Activated CD4-positive, alpha-beta memory T cell treated with anti-CD3 and anti-CD28 coated beads for 36 hours (primary cell): ENCODE measurements at regions of chr6 and their contacts with region 1.

Region 1: GRCh38 chr6:108113557-108114519 is 39.3 kb upstream of the OSTM1 start:
- DNase-seq: peak; percentile 21
- H3K4me3 Mint-ChIP-seq: peak overlapping the region; percentile 46
- H3K27ac Mint-ChIP-seq: no peak overlapping the region
- H3K4me1 Mint-ChIP-seq: peaks cover 43% of the 10 kb centered on the region
- H3K27me3 Mint-ChIP-seq: peaks cover 71% of the 10 kb centered on the region

Region 2: DNA sequence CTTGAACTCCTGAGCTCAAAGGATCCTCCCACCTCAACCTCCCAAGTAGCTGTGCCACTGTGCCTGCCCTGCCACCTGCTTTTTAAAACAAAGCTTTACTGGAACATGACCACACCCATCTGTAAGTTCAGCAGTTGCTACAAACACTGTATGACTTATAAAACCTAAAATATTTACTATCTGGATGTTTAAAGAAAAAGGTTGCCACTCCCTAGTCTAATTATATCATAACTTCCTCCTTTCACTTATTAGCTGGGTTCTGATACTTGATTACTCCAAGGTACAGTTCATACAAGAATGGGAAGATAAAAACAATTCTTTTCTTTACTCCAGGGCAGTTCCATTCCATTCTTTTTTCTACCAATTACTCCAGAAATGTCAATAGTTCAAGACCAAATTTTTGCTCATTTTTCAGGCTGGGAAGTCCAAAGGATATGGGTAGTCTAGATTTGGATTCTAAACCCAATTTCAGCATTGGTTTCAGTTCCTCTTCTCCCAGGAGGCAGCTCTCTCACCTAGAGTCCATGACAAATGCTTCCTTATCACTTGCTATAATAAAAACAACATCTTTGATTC is 218.9 kb before region 1 on chr6:
- CTCF ChIA-PET with region 1: no interaction called
- POLR2A ChIA-PET with region 1: no interaction called
- intact Hi-C with region 1: no loop called
- DNase-seq: no peak
- H3K4me3 Mint-ChIP-seq: no peak overlapping the region
- H3K27ac Mint-ChIP-seq: no peak overlapping the region
- H3K4me1 Mint-ChIP-seq: peaks cover 7% of the 10 kb centered on the region
- H3K27me3 Mint-ChIP-seq: no peaks in the 10 kb centered on the region

Region 3: GRCh38 chr6:107977283-107977682 is 136.6 kb before region 1 on chr6:
- CTCF ChIA-PET with region 1: no interaction called
- POLR2A ChIA-PET with region 1: no interaction called
- intact Hi-C with region 1: loop called (anchors 2 kb)
- DNase-seq: no peak
- H3K4me3 Mint-ChIP-seq: no peak overlapping the region
- H3K27ac Mint-ChIP-seq: no peak overlapping the region
- H3K4me1 Mint-ChIP-seq: no peaks in the 10 kb centered on the region
- H3K27me3 Mint-ChIP-seq: no peaks in the 10 kb centered on the region

Region 4: DNA sequence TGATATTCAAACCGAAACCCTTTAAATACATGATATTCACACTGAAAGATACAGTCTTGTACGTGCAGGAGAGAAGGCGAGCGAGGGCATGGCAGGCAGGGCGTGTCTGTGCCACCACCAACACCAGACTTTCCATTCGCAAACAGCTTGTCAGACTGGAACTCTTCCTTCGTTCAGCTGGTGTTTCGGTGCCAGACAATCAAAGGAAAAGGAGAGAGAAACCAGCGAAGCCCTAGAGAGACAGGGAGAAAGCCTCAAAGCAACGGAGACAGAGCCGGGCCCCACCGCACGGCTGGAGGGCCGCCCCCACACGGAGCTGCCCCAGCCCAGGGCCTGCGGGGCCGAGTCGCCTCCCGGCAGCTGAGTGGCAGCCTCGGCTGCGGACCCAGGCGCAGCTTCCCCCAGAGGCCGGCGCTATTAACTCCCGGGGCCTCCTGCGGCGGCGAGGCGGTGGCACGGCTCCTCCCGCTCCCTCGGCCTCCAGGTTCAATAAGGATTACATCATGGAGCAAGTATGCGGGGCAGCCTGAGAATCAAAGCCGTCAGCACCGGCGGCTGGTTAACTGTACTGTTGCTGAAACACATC is 19.8 kb after region 1 on chr6:
- CTCF ChIA-PET with region 1: interaction called, 3 read pairs
- POLR2A ChIA-PET with region 1: no interaction called
- intact Hi-C with region 1: loop called (anchors 2 kb)
- DNase-seq: peak; percentile 55
- H3K4me3 Mint-ChIP-seq: peak overlapping the region; percentile 72
- H3K27ac Mint-ChIP-seq: no peak overlapping the region
- H3K4me1 Mint-ChIP-seq: peaks cover 9% of the 10 kb centered on the region
- H3K27me3 Mint-ChIP-seq: peaks cover 61% of the 10 kb centered on the region

Region 5: DNA sequence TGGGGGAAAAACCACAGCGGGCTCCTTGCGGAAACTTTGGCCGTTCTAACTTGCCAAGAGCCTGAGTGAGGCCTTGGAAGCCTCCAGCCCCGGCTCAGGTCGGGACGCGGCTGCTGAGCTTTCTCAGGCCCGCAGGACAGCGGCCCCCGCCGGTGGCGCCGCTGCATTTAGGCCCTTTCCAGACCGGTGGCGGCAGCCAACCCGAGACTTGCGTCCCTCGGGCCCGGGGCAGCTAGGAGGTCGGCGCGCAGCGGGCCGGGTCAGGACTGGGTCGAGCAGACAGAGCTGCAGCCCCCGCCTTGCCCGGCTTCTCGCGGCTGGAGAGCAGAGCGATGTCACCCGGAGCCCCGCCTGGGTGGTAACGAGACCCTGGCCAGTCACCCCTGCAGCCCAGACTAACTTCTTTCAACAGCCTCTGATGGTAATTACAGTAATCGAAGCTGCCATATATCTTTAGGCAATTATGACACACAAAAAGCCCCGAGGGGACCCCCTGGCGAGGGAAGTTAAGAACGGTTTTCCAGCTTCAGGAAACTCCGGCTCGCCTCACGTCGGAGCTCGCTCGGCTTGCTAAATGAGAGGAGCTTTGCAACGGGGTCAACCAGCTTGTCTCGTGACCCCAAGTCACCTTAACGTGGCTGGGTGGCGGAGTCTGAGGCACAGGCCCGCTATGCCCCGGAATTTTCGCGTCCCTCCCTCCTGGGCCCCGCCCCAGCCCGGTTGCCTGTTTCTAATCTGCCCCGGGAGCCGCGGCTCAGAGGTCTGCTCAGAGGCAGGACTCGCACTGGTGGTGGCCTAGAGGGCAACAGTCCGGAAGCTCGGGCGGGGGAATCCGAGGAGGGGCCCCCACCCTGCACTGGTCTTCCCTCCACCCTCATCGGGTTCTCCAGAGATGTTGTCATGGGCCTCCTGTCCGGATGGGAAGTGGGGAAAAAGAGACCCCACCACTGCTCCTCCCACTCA is 54.9 kb after region 1 on chr6:
- CTCF ChIA-PET with region 1: interaction called, 9 read pairs
- POLR2A ChIA-PET with region 1: no interaction called
- intact Hi-C with region 1: loop called (anchors 2 kb)
- DNase-seq: peak; percentile 37
- H3K4me3 Mint-ChIP-seq: peak overlapping the region; percentile 48
- H3K27ac Mint-ChIP-seq: no peak overlapping the region
- H3K4me1 Mint-ChIP-seq: peaks cover 40% of the 10 kb centered on the region
- H3K27me3 Mint-ChIP-seq: peaks cover 84% of the 10 kb centered on the region

Region 6: DNA sequence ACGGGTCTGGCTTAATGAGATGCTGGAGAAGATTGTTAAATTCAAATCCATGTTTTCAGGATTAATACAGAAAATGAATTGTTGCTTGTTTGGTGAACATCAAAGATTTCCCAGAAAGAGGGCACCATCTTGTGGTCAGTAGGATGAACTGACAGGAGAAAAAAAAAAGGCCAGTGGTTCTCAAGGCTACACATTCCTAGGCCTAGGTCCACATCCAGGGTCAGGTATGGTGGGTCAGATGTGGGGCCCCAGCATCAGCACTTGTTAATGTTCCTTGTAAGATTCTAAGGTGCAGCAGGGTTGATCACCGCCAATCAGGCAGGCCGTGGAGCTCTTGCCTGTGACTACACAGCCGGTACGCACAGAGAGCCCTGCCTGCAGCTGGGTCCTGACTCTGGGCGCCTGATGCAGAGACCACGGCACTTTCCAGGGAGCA is 412.9 kb after region 1 on chr6:
- CTCF ChIA-PET with region 1: interaction called, 6 read pairs
- POLR2A ChIA-PET with region 1: interaction called, 4 read pairs
- intact Hi-C with region 1: loop called (anchors 1 kb)
- DNase-seq: no peak
- H3K4me3 Mint-ChIP-seq: no peak overlapping the region
- H3K27ac Mint-ChIP-seq: no peak overlapping the region
- H3K4me1 Mint-ChIP-seq: no peaks in the 10 kb centered on the region
- H3K27me3 Mint-ChIP-seq: no peaks in the 10 kb centered on the region